ENCODE measurements at regions of chr9 and their contacts with region 1.

Region 1: DNA sequence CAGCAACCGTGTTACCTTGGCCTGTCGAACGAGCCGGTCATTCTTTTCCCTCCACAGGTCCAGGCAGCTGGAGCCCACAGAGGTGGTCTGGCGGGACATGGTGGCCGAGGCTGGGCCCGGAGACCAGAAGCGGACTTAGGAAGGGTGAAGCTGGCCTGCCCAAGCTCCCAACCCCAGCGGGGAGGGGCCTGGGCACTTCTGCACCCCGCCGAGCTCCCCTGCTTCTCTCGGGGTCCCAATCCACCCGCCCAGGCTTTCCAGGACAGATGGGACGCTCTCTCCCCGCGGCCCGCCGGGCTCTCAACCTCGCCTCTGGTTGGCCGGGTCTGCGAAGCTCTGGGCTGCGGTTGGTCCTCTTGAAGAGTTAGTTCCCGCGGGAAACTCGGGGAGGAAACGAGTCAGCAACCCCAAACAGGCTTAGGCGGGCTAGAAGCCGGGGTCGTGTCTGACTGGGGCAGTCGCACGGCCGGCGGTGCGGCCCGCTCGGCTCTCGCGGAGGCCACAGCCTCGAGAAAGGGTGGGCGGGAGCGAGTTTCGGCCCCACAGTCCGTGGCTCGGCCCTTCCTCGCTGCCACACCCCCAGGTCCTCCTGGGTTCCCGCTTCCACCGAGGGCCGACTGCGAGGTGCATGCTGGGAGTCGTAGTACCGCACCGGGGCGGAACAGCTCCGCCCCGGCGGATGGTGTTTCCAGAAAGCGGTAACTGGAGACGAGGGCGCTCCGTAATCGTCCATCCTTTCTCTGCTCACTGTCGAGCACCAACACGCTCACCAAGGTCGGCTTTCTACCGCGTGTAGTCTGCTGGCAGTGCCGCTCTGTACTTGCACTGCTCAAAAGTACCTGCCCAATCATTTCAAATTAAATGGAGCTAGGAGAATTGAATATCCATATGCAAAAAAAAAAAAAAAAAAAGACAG is at the start of gene FANCG:
- DNase-seq: peak; percentile 88
- ATAC-seq: peak; percentile 93
- H3K4me3 ChIP-seq: peak within 1 kb of the TSS; percentile 75 to 93 (median 82)
- H3K4me3 Mint-ChIP-seq: peak within 1 kb of the TSS; percentile 92
- H3K27ac ChIP-seq: peak within 1 kb of the TSS; percentile 25 to 50
- H3K27ac Mint-ChIP-seq: peak within 1 kb of the TSS; percentile 84
- H3K4me1 ChIP-seq: peaks cover 12 to 16% of the 10 kb centered on the region in 2 donors
- H3K4me1 Mint-ChIP-seq: peaks cover 18% of the 10 kb centered on the region
- H3K27me3 ChIP-seq: no peaks in the 10 kb centered on the region
- H3K27me3 Mint-ChIP-seq: no peaks in the 10 kb centered on the region
- CTCF ChIP-seq: no peak
- total RNA-seq, gene FANCG: 38.9 and 40.1 TPM in 2 replicates

Region 2: GRCh38 chr9:35044061-35044460 is 35.6 kb before region 1 on chr9:
- CTCF ChIA-PET with region 1: no interaction called
- POLR2A ChIA-PET with region 1: interaction called, 14 read pairs
- intact Hi-C with region 1: no loop called
- DNase-seq: no peak
- ATAC-seq: no peak
- H3K4me3 ChIP-seq: no peak overlapping the region
- H3K4me3 Mint-ChIP-seq: no peak overlapping the region
- H3K27ac ChIP-seq: no peak overlapping the region
- H3K27ac Mint-ChIP-seq: no peak overlapping the region
- H3K4me1 ChIP-seq: no peaks in the 10 kb centered on the region
- H3K4me1 Mint-ChIP-seq: peaks cover 3% of the 10 kb centered on the region
- H3K27me3 ChIP-seq: no peaks in the 10 kb centered on the region
- H3K27me3 Mint-ChIP-seq: no peaks in the 10 kb centered on the region
- CTCF ChIP-seq: no peak

Region 3: GRCh38 chr9:35096035-35096849 is 16.6 kb after region 1 on chr9 and contains the start of gene PIGO:
- CTCF ChIA-PET with region 1: interaction called, 26 read pairs
- POLR2A ChIA-PET with region 1: interaction called, 10 read pairs
- intact Hi-C with region 1: loop called (anchors 1 kb)
- DNase-seq: peak; percentile 94
- ATAC-seq: peak; percentile 92
- H3K4me3 ChIP-seq: peak within 1 kb of the TSS; percentile 61 to 100 (median 93)
- H3K4me3 Mint-ChIP-seq: peak within 1 kb of the TSS; percentile 90
- H3K27ac ChIP-seq: peak within 1 kb of the TSS; percentile 99
- H3K27ac Mint-ChIP-seq: peak within 1 kb of the TSS; percentile 94
- H3K4me1 ChIP-seq: peaks cover 7 to 16% of the 10 kb centered on the region in 2 donors
- H3K4me1 Mint-ChIP-seq: peaks cover 34% of the 10 kb centered on the region
- H3K27me3 ChIP-seq: no peaks in the 10 kb centered on the region
- H3K27me3 Mint-ChIP-seq: no peaks in the 10 kb centered on the region
- CTCF ChIP-seq: peak; percentile 85
- total RNA-seq, gene PIGO: 32.5 and 34.7 TPM in 2 replicates

Region 4: DNA sequence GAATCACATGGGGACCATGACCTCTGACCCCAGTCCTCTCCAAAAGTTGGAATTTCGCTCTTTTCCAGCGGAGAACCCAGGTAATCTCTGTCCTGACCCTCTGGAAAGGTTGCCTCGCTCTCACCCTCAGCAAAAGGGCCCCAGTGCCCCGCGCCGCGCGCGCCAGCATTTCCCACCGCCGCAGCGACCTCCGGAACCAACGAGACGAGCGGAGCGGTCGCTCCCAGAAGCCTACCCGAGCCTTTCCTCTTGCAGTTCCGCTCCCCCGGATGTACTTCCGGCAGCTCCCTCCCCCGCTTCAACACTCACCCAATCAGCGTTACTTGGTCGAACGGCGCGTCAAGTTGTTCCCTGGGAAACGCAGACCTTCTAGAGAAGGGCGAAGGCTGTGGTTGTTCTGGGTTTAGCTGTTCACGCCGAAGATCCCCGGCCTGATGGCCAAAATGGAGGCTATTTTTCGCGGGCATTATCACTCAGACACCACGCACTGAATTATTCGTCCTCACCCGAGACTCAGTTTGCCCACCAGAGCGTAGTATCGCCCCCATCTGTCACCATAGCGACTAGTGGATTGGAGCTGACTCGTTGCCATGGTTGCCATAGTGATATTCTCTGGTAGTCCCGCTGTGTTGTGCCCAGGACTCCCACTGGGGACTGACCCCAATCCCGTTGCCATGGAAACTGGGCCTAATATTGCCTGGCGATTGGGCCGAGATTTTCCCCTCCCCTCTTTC is 23.4 kb after region 1 on chr9 and contains the start of gene STOML2:
- CTCF ChIA-PET with region 1: interaction called, 26 read pairs
- POLR2A ChIA-PET with region 1: interaction called, 15 read pairs
- intact Hi-C with region 1: loop called (anchors 1 kb)
- DNase-seq: peak; percentile 95
- ATAC-seq: peak; percentile 95
- H3K4me3 ChIP-seq: peak within 1 kb of the TSS; percentile 61 to 94 (median 88)
- H3K4me3 Mint-ChIP-seq: peak within 1 kb of the TSS; percentile 86
- H3K27ac ChIP-seq: peak within 1 kb of the TSS; percentile 86 to 96
- H3K27ac Mint-ChIP-seq: peak within 1 kb of the TSS; percentile 97
- H3K4me1 ChIP-seq: peaks cover 13 to 22% of the 10 kb centered on the region in 2 donors
- H3K4me1 Mint-ChIP-seq: peaks cover 28% of the 10 kb centered on the region
- H3K27me3 ChIP-seq: no peaks in the 10 kb centered on the region
- H3K27me3 Mint-ChIP-seq: no peaks in the 10 kb centered on the region
- CTCF ChIP-seq: no peak
- total RNA-seq, gene STOML2: 52.1 and 58.9 TPM in 2 replicates

Region 5: DNA sequence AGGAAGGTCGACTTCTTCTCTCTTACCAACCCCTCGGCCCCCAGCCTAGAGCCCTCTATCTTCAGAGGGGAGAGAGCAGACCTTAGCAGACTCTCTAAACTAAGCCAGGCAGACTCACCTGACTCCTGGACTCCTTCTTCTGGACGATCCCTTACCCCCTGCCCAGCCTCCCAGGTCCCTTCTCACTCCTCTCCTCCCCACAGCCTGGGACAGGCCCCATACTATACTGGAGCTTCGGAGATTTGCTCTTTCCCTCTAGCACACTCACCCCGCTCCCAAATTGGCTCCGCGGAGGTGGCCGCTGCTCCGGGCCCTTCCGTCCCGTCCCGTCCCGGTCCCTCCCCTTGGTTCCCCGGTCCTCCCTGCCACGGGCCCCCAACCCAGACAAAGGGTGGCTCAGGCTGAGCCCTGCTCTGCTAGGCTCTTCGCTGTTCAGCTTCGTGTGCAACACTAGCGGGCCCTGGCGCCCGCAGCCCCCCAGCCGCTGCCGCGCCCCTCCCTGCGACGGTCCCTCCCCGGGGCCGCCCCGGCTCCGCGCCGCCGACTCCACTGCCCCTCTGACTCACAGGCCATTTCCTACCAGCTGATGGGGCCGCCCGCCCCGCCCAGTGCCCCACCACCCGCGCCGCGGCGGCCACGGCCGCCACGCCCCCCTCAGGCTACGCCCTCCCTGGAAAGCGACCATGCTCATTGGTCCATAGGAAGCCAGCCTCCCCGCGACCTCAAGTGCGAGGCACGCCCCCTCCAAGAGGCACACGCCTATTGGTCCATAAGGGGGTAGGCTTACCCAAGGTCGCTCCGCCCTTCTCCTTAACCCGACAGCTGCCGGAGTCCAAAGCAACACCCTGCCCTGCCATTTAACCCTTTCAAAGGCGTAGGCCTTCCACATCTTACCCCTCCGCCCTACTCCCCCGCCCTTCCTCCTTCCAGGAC is 31.6 kb after region 1 on chr9:
- CTCF ChIA-PET with region 1: interaction called, 4 read pairs
- POLR2A ChIA-PET with region 1: interaction called, 5 read pairs
- intact Hi-C with region 1: loop called (anchors 1 kb)
- DNase-seq: peak; percentile 96
- ATAC-seq: peak; percentile 77
- H3K4me3 ChIP-seq: peak overlapping the region; percentile 32 to 74 (median 59)
- H3K4me3 Mint-ChIP-seq: peak overlapping the region; percentile 88
- H3K27ac ChIP-seq: peak overlapping the region; percentile 80 to 83
- H3K27ac Mint-ChIP-seq: peak overlapping the region; percentile 93
- H3K4me1 ChIP-seq: peaks cover 33 to 45% of the 10 kb centered on the region in 2 donors
- H3K4me1 Mint-ChIP-seq: peaks cover 58% of the 10 kb centered on the region
- H3K27me3 ChIP-seq: no peaks in the 10 kb centered on the region
- H3K27me3 Mint-ChIP-seq: no peaks in the 10 kb centered on the region
- CTCF ChIP-seq: no peak